CD8-positive, alpha-beta memory T cell (primary cell): ENCODE measurements at regions of chr3 and their contacts with region 1.

Region 1: GRCh38 chr3:13648060-13649001 is 99.4 kb downstream of the FBLN2 start:
- DNase-seq: peak; percentile 61 to 77 (median 62)
- H3K4me3 ChIP-seq: no peak overlapping the region
- H3K4me3 Mint-ChIP-seq: peak overlapping the region in 2 of 7 donors; percentile 18 to 52
- H3K27ac ChIP-seq: no peak overlapping the region
- H3K27ac Mint-ChIP-seq: peak overlapping the region in 2 of 8 donors; percentile 25 to 56
- H3K4me1 ChIP-seq: peaks cover 23% of the 10 kb centered on the region
- H3K4me1 Mint-ChIP-seq: peaks cover 26 to 33% (median 33%) of the 10 kb centered on the region in 3 donors
- H3K27me3 ChIP-seq: peaks cover 12% of the 10 kb centered on the region
- H3K27me3 Mint-ChIP-seq: peaks cover 23 to 35% of the 10 kb centered on the region in 2 donors

Region 2: GRCh38 chr3:13091898-13092611 is 556.3 kb before region 1 on chr3:
- CTCF ChIA-PET with region 1: interaction called, 36 read pairs
- POLR2A ChIA-PET with region 1: no interaction called
- DNase-seq: peak; percentile 66 to 84 (median 70)
- H3K4me3 ChIP-seq: no peak overlapping the region
- H3K4me3 Mint-ChIP-seq: no peak overlapping the region
- H3K27ac ChIP-seq: no peak overlapping the region
- H3K27ac Mint-ChIP-seq: peak overlapping the region in 1 of 8 donors; percentile 38
- H3K4me1 ChIP-seq: no peaks in the 10 kb centered on the region
- H3K4me1 Mint-ChIP-seq: peaks cover 5 to 7% (median 7%) of the 10 kb centered on the region in 3 donors
- H3K27me3 ChIP-seq: no peaks in the 10 kb centered on the region
- H3K27me3 Mint-ChIP-seq: peaks cover 4% of the 10 kb centered on the region in 2 donors

Region 3: DNA sequence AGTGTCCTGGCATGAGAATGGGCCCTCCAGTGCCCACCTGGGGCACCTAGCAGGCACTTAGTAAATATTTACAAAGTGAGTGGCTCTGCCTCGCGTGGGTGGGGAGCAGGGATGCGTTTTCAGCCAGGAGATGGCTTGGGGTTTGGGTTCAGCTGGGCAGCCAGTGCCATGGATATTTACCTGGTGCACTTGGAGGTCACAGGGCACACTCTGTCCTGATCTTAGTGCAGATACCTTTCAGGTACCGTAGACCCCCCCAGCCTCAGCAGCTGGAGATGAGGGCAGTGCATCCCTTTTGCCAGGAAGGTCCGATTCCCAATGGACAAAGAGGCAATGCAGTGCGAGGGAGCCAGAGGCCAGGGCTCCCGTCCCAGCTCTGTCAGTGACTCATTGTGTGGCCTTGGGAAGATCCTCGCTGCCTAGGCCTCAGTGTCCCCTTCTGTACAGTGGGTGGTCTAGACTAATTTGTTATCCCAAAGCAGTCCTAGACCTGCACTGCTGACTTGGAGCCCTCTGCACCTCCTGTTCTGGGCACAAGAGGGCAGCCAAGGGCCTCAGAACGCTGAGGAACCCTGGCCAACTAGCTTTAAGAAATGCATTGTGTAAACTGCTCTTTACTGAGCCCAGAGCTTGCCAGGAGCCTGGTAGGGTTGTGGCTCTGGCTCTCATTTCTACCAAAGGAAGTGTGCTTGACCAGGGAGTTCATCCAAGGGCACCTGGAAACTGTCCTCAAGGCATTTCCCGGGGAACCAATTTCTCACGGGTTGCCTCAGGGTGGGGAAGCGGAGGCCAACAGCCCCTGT is 152.2 kb before region 1 on chr3:
- CTCF ChIA-PET with region 1: interaction called, 74 read pairs
- POLR2A ChIA-PET with region 1: no interaction called
- DNase-seq: peak; percentile 41 to 73 (median 50)
- H3K4me3 ChIP-seq: no peak overlapping the region
- H3K4me3 Mint-ChIP-seq: no peak overlapping the region
- H3K27ac ChIP-seq: no peak overlapping the region
- H3K27ac Mint-ChIP-seq: peak overlapping the region in 1 of 8 donors; percentile 25
- H3K4me1 ChIP-seq: no peaks in the 10 kb centered on the region
- H3K4me1 Mint-ChIP-seq: peaks cover 0 to 8% (median 6%) of the 10 kb centered on the region in 3 donors
- H3K27me3 ChIP-seq: no peaks in the 10 kb centered on the region
- H3K27me3 Mint-ChIP-seq: peaks cover 0 to 1% of the 10 kb centered on the region in 2 donors

Region 4: GRCh38 chr3:13559764-13560525 is 88.4 kb before region 1 on chr3:
- CTCF ChIA-PET with region 1: no interaction called
- POLR2A ChIA-PET with region 1: no interaction called
- DNase-seq: no peak
- H3K4me3 ChIP-seq: no peak overlapping the region
- H3K4me3 Mint-ChIP-seq: no peak overlapping the region
- H3K27ac ChIP-seq: no peak overlapping the region
- H3K27ac Mint-ChIP-seq: no peak overlapping the region
- H3K4me1 ChIP-seq: no peaks in the 10 kb centered on the region
- H3K4me1 Mint-ChIP-seq: peaks cover 0 to 2% (median 0%) of the 10 kb centered on the region in 3 donors
- H3K27me3 ChIP-seq: no peaks in the 10 kb centered on the region
- H3K27me3 Mint-ChIP-seq: peaks cover 17 to 32% of the 10 kb centered on the region in 2 donors

Region 5: GRCh38 chr3:13621381-13622221 is 26.7 kb before region 1 on chr3:
- CTCF ChIA-PET with region 1: interaction called, 12 read pairs
- POLR2A ChIA-PET with region 1: no interaction called
- DNase-seq: peak; percentile 26 to 72 (median 56)
- H3K4me3 ChIP-seq: no peak overlapping the region
- H3K4me3 Mint-ChIP-seq: peak overlapping the region; percentile 7 to 83 (median 58)
- H3K27ac ChIP-seq: no peak overlapping the region
- H3K27ac Mint-ChIP-seq: peak overlapping the region; percentile 52 to 94 (median 87)
- H3K4me1 ChIP-seq: no peaks in the 10 kb centered on the region
- H3K4me1 Mint-ChIP-seq: peaks cover 0 to 8% (median 0%) of the 10 kb centered on the region in 3 donors
- H3K27me3 ChIP-seq: no peaks in the 10 kb centered on the region
- H3K27me3 Mint-ChIP-seq: no peaks in the 10 kb centered on the region

Region 6: GRCh38 chr3:13637311-13637891 is 10.9 kb before region 1 on chr3:
- CTCF ChIA-PET with region 1: interaction called, 13 read pairs
- POLR2A ChIA-PET with region 1: no interaction called
- DNase-seq: no peak
- H3K4me3 ChIP-seq: no peak overlapping the region
- H3K4me3 Mint-ChIP-seq: no peak overlapping the region
- H3K27ac ChIP-seq: no peak overlapping the region
- H3K27ac Mint-ChIP-seq: peak overlapping the region in 1 of 8 donors; percentile 57
- H3K4me1 ChIP-seq: no peaks in the 10 kb centered on the region
- H3K4me1 Mint-ChIP-seq: no peaks in the 10 kb centered on the region
- H3K27me3 ChIP-seq: no peaks in the 10 kb centered on the region
- H3K27me3 Mint-ChIP-seq: peaks cover 3 to 10% of the 10 kb centered on the region in 2 donors

Region 7: DNA sequence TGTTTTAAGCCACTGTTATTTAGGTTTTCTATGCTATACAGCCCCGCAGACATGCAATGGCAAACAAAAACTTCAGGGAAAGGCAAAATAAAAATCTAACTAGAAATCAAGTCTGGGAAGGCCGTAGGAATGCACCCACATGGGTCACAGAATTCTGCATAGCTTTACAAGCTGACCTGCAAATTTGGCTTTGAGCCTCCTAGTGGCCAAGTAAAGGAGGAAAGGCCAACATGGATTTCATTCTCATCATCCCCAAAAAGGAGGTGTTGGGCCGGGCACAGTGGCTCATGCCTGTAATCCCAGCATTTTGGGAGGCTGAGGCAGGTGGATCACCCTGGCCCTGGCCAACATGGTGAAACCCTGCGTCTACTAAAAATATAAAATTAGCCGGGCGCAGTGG is 24.9 kb after region 1 on chr3:
- CTCF ChIA-PET with region 1: no interaction called
- POLR2A ChIA-PET with region 1: no interaction called
- DNase-seq: no peak
- H3K4me3 ChIP-seq: no peak overlapping the region
- H3K4me3 Mint-ChIP-seq: no peak overlapping the region
- H3K27ac ChIP-seq: no peak overlapping the region
- H3K27ac Mint-ChIP-seq: no peak overlapping the region
- H3K4me1 ChIP-seq: no peaks in the 10 kb centered on the region
- H3K4me1 Mint-ChIP-seq: no peaks in the 10 kb centered on the region
- H3K27me3 ChIP-seq: no peaks in the 10 kb centered on the region
- H3K27me3 Mint-ChIP-seq: peaks cover 28 to 36% of the 10 kb centered on the region in 2 donors

Region 8: GRCh38 chr3:13884851-13885703 is 236.7 kb after region 1 on chr3:
- CTCF ChIA-PET with region 1: interaction called, 315 read pairs
- POLR2A ChIA-PET with region 1: no interaction called
- DNase-seq: peak; percentile 51 to 77 (median 59)
- H3K4me3 ChIP-seq: no peak overlapping the region
- H3K4me3 Mint-ChIP-seq: peak overlapping the region in 1 of 7 donors; percentile 20
- H3K27ac ChIP-seq: no peak overlapping the region
- H3K27ac Mint-ChIP-seq: no peak overlapping the region
- H3K4me1 ChIP-seq: peaks cover 13% of the 10 kb centered on the region
- H3K4me1 Mint-ChIP-seq: peaks cover 6 to 11% (median 7%) of the 10 kb centered on the region in 3 donors
- H3K27me3 ChIP-seq: peaks cover 20% of the 10 kb centered on the region
- H3K27me3 Mint-ChIP-seq: peaks cover 22 to 39% of the 10 kb centered on the region in 2 donors